CD14-positive monocyte (primary cell): ENCODE measurements at regions of chr5 and their contacts with region 1.

Region 1: DNA sequence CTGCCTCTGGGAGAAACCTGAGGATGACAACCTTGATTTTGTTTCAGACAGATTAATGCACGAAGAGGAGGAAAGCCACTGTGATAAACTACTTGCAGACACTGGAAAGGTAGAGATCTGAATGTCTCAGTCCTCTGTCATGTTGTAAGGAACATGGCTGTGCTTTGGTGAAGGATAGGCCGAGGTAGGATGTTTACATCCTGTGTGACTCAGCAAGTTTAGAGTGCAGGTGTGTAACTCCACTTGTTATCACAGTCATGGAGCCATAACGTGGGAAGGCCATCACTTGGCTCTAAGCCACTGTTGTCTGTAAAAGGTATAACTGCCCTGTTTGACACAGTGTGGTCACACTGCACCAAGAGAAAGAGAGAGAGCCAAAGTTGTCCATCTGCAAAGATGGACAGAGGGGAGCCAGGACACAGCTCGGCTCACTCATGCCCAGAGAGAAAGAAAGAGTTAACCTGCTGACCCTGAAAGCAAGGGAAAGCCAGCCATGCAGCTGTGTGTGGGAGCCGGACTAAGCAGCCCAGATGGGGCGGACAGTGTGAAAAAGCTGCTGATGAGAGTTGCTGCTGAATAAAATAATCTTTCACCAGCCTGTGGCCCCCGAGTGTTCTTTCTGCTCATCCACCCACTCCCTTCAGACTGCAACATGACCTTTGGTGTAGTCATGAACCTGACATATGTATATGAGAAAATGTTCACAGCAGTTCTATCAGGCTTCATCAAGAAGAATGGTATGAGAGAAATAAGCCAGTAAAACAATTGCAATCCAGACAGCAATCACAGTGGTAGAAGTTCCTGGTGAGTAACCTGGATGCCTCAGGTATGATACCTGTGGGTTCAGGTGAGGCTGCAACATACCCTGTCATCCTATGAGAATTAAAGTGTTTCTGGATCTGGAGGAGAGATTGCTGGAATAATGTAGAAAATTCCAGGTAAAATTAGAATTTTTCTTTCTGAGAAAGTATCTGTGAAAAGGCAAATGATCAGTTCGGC is 115.9 kb downstream of the TARS1 start:
- DNase-seq: no peak
- H3K4me3 ChIP-seq: no peak overlapping the region
- H3K4me3 Mint-ChIP-seq: no peak overlapping the region
- H3K27ac ChIP-seq: no peak overlapping the region
- H3K27ac Mint-ChIP-seq: no peak overlapping the region
- H3K4me1 ChIP-seq: no peaks in the 10 kb centered on the region
- H3K4me1 Mint-ChIP-seq: no peaks in the 10 kb centered on the region
- H3K27me3 ChIP-seq: no peaks in the 10 kb centered on the region
- H3K27me3 Mint-ChIP-seq: peaks cover 0 to 3% (median 2%) of the 10 kb centered on the region in 3 donors
- CTCF ChIP-seq: no peak

Region 2: GRCh38 chr5:33291216-33292000 is 265.2 kb before region 1 on chr5:
- intact Hi-C with region 1: no loop called
- DNase-seq: no peak
- H3K4me3 ChIP-seq: no peak overlapping the region
- H3K4me3 Mint-ChIP-seq: no peak overlapping the region
- H3K27ac ChIP-seq: no peak overlapping the region
- H3K27ac Mint-ChIP-seq: no peak overlapping the region
- H3K4me1 ChIP-seq: no peaks in the 10 kb centered on the region
- H3K4me1 Mint-ChIP-seq: no peaks in the 10 kb centered on the region
- H3K27me3 ChIP-seq: no peaks in the 10 kb centered on the region
- H3K27me3 Mint-ChIP-seq: peaks cover 0 to 5% (median 0%) of the 10 kb centered on the region in 3 donors
- CTCF ChIP-seq: no peak

Region 3: GRCh38 chr5:33588654-33589372 is 32.2 kb after region 1 on chr5:
- intact Hi-C with region 1: no loop called
- DNase-seq: no peak
- H3K4me3 ChIP-seq: no peak overlapping the region
- H3K4me3 Mint-ChIP-seq: no peak overlapping the region
- H3K27ac ChIP-seq: no peak overlapping the region
- H3K27ac Mint-ChIP-seq: no peak overlapping the region
- H3K4me1 ChIP-seq: no peaks in the 10 kb centered on the region
- H3K4me1 Mint-ChIP-seq: no peaks in the 10 kb centered on the region
- H3K27me3 ChIP-seq: no peaks in the 10 kb centered on the region
- H3K27me3 Mint-ChIP-seq: no peaks in the 10 kb centered on the region
- CTCF ChIP-seq: peak; percentile 39

Region 4: GRCh38 chr5:33611877-33612276 is 55.2 kb after region 1 on chr5:
- intact Hi-C with region 1: loop called in 1 of 2 experiments (anchors 5 kb)
- DNase-seq: no peak
- H3K4me3 ChIP-seq: no peak overlapping the region
- H3K4me3 Mint-ChIP-seq: no peak overlapping the region
- H3K27ac ChIP-seq: no peak overlapping the region
- H3K27ac Mint-ChIP-seq: no peak overlapping the region
- H3K4me1 ChIP-seq: no peaks in the 10 kb centered on the region
- H3K4me1 Mint-ChIP-seq: no peaks in the 10 kb centered on the region
- H3K27me3 ChIP-seq: no peaks in the 10 kb centered on the region
- H3K27me3 Mint-ChIP-seq: peaks cover 0 to 2% (median 1%) of the 10 kb centered on the region in 3 donors
- CTCF ChIP-seq: no peak